Left lung (tissue), 14 donors: ENCODE measurements at regions of chrX and their contacts with region 1.

Region 1: GRCh38 chrX:38175140-38175539 is 45.5 kb downstream of the SRPX start:
- DNase-seq: peak in 1 of 4 donors; percentile 40
- ATAC-seq: peak; percentile 76
- H3K4me3 ChIP-seq: no peak overlapping the region
- H3K27ac ChIP-seq: no peak overlapping the region
- H3K4me1 ChIP-seq: no peaks in the 10 kb centered on the region
- H3K27me3 ChIP-seq: no peaks in the 10 kb centered on the region
- CTCF ChIP-seq: no peak

Region 2: DNA sequence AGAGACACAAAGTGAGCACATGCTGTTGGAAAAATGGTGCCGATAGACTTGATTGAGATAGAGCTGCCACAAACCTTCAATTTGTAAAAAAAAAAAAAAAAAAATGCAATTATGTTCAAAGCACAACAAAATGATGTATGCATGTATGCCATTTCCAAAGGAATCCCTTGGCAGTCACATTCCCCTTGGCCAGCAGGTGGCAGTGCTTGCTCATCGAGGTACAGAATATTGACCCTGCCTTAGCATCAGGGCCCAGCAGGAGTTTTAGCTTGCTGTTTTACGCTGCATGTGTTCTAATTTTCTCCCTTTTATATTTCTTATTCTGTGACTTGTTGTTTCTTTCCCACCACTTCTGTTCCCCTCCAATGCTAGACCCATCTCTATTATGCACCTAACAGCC is 429.8 kb before region 1 on chrX:
- intact Hi-C with region 1: loop called in 1 of 2 experiments (anchors 10 kb)
- DNase-seq: peak; percentile 59 to 79 (median 72)
- ATAC-seq: peak; percentile 96
- H3K4me3 ChIP-seq: no peak overlapping the region
- H3K27ac ChIP-seq: peak overlapping the region in 1 of 2 donors; percentile 86
- H3K4me1 ChIP-seq: no peaks in the 10 kb centered on the region
- H3K27me3 ChIP-seq: no peaks in the 10 kb centered on the region
- CTCF ChIP-seq: peak; percentile 75 to 86

Region 3: DNA sequence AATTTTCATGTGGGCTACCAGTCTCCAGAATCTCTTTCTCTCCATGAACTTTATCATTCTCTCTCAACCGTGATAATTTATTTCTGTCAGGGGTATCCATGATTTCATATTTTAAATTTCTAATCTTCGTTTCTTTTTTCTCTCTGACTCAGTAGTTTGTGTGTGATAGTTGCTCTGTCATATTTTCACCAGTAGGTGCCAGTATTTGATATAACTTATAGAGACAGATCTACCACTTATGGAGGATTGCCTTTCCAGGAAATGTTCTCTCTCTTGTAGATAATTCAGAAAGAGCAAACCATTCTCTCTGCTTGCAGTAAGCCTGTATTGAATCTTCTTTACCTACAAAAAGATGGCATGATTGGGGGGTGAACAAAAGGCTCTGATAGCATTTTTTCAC is 248.4 kb before region 1 on chrX:
- intact Hi-C with region 1: loop called in 1 of 2 experiments (anchors 5 kb)
- DNase-seq: peak in 2 of 4 donors; percentile 11 to 35
- ATAC-seq: peak; percentile 80
- H3K4me3 ChIP-seq: no peak overlapping the region
- H3K27ac ChIP-seq: no peak overlapping the region
- H3K4me1 ChIP-seq: no peaks in the 10 kb centered on the region
- H3K27me3 ChIP-seq: no peaks in the 10 kb centered on the region
- CTCF ChIP-seq: peak; percentile 39 to 42

Region 4: DNA sequence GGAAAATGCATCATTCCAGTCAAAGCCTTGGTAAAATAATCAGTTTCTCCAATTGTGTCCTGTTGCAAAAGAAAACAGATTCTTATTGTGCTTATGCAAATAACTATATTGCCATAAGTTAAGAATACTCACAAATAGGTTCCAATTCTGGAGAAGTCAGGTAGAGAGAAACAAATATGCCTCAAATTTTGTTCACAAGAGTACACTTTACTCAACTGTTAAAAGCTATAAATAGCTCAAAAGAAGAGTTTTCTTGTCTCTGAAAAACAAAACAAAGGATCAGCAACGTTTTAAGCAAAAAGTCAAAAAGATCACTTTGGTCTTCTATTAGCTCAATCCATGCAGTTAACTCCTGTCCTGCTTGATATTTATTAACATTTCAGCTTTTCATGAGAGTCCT is 146.8 kb before region 1 on chrX:
- intact Hi-C with region 1: no loop called
- DNase-seq: no peak
- ATAC-seq: no peak
- H3K4me3 ChIP-seq: no peak overlapping the region
- H3K27ac ChIP-seq: no peak overlapping the region
- H3K4me1 ChIP-seq: no peaks in the 10 kb centered on the region
- H3K27me3 ChIP-seq: no peaks in the 10 kb centered on the region
- CTCF ChIP-seq: no peak

Region 5: DNA sequence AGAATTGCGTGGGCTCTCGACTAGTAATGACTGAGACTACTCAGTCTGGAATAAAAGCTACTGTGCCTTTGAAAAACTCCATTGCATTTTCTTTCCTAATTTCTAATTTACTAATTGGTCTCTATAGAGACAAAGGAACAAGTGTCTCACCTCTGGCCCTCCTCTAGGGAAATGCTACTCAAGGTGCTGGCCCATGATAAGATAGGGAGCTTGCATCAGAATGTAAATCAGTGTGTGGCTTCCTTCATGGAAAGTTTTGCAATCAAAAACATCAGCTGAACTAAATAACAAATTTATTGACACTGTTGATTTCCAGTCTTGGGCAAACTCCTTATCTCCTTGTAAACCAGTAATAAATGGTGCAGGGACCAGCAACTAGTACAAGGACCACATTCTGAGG is 36.2 kb before region 1 on chrX:
- intact Hi-C with region 1: no loop called
- DNase-seq: no peak
- ATAC-seq: no peak
- H3K4me3 ChIP-seq: no peak overlapping the region
- H3K27ac ChIP-seq: no peak overlapping the region
- H3K4me1 ChIP-seq: no peaks in the 10 kb centered on the region
- H3K27me3 ChIP-seq: peaks cover 0 to 6% of the 10 kb centered on the region in 2 donors
- CTCF ChIP-seq: no peak